ENCODE measurements at regions of chrX and their contacts with region 1.

Region 1: GRCh38 chrX:66030505-66031317 is 9.2 kb downstream of the VSIG4 start:
- DNase-seq: peak in 4 of 9 experiments; percentile 17 to 64 (median 45)
- ATAC-seq: peak; percentile 42
- H3K4me3 ChIP-seq: no peak overlapping the region
- H3K4me3 Mint-ChIP-seq: no peak overlapping the region
- H3K27ac ChIP-seq: no peak overlapping the region
- H3K27ac Mint-ChIP-seq: no peak overlapping the region
- H3K4me1 ChIP-seq: no peaks in the 10 kb centered on the region
- H3K4me1 Mint-ChIP-seq: peaks cover 5% of the 10 kb centered on the region
- H3K27me3 ChIP-seq: no peaks in the 10 kb centered on the region
- H3K27me3 Mint-ChIP-seq: no peaks in the 10 kb centered on the region
- CTCF ChIP-seq: peak; percentile 46

Region 2: GRCh38 chrX:64152857-64153256 is 1877.9 kb before region 1 on chrX:
- CTCF ChIA-PET with region 1: no interaction called
- POLR2A ChIA-PET with region 1: no interaction called
- intact Hi-C with region 1: no loop called
- DNase-seq: no peak
- ATAC-seq: no peak
- H3K4me3 ChIP-seq: no peak overlapping the region
- H3K4me3 Mint-ChIP-seq: no peak overlapping the region
- H3K27ac ChIP-seq: no peak overlapping the region
- H3K27ac Mint-ChIP-seq: no peak overlapping the region
- H3K4me1 ChIP-seq: no peaks in the 10 kb centered on the region
- H3K4me1 Mint-ChIP-seq: no peaks in the 10 kb centered on the region
- H3K27me3 ChIP-seq: no peaks in the 10 kb centered on the region
- H3K27me3 Mint-ChIP-seq: no peaks in the 10 kb centered on the region
- CTCF ChIP-seq: no peak

Region 3: GRCh38 chrX:66098162-66098561 is 67.5 kb after region 1 on chrX:
- CTCF ChIA-PET with region 1: no interaction called
- POLR2A ChIA-PET with region 1: no interaction called
- intact Hi-C with region 1: loop called in 1 of 2 experiments (anchors 10 kb)
- DNase-seq: no peak
- ATAC-seq: no peak
- H3K4me3 ChIP-seq: no peak overlapping the region
- H3K4me3 Mint-ChIP-seq: no peak overlapping the region
- H3K27ac ChIP-seq: no peak overlapping the region
- H3K27ac Mint-ChIP-seq: no peak overlapping the region
- H3K4me1 ChIP-seq: no peaks in the 10 kb centered on the region
- H3K4me1 Mint-ChIP-seq: no peaks in the 10 kb centered on the region
- H3K27me3 ChIP-seq: no peaks in the 10 kb centered on the region
- H3K27me3 Mint-ChIP-seq: no peaks in the 10 kb centered on the region
- CTCF ChIP-seq: no peak

Region 4: DNA sequence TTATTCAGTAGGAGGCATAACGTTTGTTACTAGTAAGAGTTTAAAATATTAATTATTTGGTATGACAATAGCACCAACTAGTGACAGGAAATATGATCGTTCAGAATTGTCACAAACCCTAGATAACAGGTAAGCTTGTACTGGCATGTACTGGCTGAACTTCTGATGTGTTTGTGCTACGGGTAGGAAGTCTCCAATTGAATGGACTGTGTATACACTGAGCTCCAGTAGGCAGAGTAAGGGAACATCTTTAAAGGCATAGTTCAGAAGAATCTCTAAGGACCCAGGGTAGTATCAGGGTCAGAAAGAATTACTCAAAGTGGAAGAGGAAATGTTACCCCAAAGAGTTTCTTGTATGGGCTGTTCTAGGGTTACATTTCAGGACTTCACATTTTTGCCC is 377.8 kb after region 1 on chrX:
- CTCF ChIA-PET with region 1: no interaction called
- POLR2A ChIA-PET with region 1: no interaction called
- intact Hi-C with region 1: loop called (anchors 2 to 5 kb)
- DNase-seq: peak in 2 of 9 experiments; percentile 7 to 32
- ATAC-seq: no peak
- H3K4me3 ChIP-seq: no peak overlapping the region
- H3K4me3 Mint-ChIP-seq: no peak overlapping the region
- H3K27ac ChIP-seq: no peak overlapping the region
- H3K27ac Mint-ChIP-seq: no peak overlapping the region
- H3K4me1 ChIP-seq: no peaks in the 10 kb centered on the region
- H3K4me1 Mint-ChIP-seq: no peaks in the 10 kb centered on the region
- H3K27me3 ChIP-seq: no peaks in the 10 kb centered on the region
- H3K27me3 Mint-ChIP-seq: no peaks in the 10 kb centered on the region
- CTCF ChIP-seq: peak; percentile 19

Measured in CD8-positive, alpha-beta T cell (primary cell).